Activated CD4-positive, alpha-beta T cell treated with anti-CD3 and anti-CD28 coated beads for 36 hours (primary cell): ENCODE measurements at regions of chr14 and their contacts with region 1.

Region 1: GRCh38 chr14:50321009-50321660 is 9.0 kb downstream of the DMAC2L start:
- DNase-seq: peak; percentile 77
- ATAC-seq: peak; percentile 98
- H3K4me3 Mint-ChIP-seq: no peak overlapping the region
- H3K27ac Mint-ChIP-seq: no peak overlapping the region
- H3K4me1 Mint-ChIP-seq: peaks cover 31% of the 10 kb centered on the region
- H3K27me3 Mint-ChIP-seq: no peaks in the 10 kb centered on the region

Region 2: DNA sequence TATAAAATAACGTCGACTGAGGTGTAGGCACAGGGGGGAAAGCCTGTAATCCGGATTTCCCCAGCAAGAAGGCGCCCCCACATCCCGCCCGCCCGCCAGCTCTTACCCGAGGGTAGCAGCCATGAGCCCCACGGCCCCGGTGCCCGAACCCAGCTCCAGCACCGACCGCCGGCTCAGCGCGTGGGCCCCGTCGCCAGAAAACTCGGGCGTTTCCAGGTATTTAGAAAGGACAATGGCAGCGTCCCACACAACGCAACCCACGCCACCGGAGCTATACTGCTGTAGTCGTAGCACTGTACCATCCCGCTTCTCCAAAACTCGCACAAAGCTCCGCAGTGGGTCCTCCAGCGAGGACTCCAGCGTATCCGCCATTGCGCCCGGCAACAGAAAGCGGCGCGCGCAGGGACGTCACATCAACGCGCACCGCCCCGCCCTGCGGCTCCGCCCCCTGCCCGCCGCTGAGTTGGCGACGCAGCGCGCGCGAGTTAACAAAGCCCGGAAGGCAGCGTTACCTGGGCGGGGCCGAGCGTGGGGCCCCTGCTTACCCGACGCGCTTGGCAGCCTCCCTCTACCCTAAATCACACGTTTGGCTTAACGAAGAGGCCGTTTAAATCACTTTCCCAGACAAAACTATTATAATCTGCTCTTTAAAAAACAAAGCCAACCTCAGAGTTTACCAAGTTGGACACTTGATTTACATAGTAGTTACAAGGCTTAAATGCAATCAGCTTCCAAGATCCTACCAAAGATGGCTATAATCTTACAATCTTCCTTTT is 204.8 kb before region 1 on chr14 and contains the start of gene VCPKMT:
- CTCF ChIA-PET with region 1: interaction called, 7 read pairs
- POLR2A ChIA-PET with region 1: no interaction called
- intact Hi-C with region 1: loop called in 1 of 2 experiments (anchors 2 kb)
- DNase-seq: peak; percentile 98
- ATAC-seq: peak; percentile 99
- H3K4me3 Mint-ChIP-seq: peak within 1 kb of the TSS; percentile 95
- H3K27ac Mint-ChIP-seq: peak within 1 kb of the TSS; percentile 97
- H3K4me1 Mint-ChIP-seq: peaks cover 25% of the 10 kb centered on the region
- H3K27me3 Mint-ChIP-seq: no peaks in the 10 kb centered on the region
- total RNA-seq, gene VCPKMT: 6.6 to 10.4 TPM

Region 3: DNA sequence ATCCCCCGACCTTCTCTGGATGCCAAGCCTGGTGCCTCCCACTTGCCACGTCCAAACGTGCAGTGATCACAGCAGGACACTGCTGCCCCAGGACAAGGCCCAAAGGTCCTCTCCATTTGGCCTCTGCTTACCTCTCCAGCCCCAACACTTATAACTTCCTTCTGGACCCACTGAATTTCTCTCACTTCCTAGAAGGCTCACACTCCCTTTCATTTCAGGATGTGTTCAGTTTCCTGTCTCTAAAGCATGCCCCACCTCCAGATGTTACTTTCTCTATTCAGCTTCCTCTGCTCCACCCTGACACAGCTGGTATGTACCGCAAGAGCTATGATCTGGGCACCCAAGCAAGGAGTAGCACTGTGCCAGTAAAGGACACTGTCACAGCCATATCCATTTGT is 42.6 kb after region 1 on chr14:
- CTCF ChIA-PET with region 1: interaction called, 10 read pairs
- POLR2A ChIA-PET with region 1: interaction called, 7 read pairs
- intact Hi-C with region 1: loop called (anchors 1 to 5 kb)
- DNase-seq: peak; percentile 66
- ATAC-seq: peak; percentile 96
- H3K4me3 Mint-ChIP-seq: peak overlapping the region; percentile 82
- H3K27ac Mint-ChIP-seq: peak overlapping the region; percentile 94
- H3K4me1 Mint-ChIP-seq: peaks cover 20% of the 10 kb centered on the region
- H3K27me3 Mint-ChIP-seq: no peaks in the 10 kb centered on the region

Region 4: DNA sequence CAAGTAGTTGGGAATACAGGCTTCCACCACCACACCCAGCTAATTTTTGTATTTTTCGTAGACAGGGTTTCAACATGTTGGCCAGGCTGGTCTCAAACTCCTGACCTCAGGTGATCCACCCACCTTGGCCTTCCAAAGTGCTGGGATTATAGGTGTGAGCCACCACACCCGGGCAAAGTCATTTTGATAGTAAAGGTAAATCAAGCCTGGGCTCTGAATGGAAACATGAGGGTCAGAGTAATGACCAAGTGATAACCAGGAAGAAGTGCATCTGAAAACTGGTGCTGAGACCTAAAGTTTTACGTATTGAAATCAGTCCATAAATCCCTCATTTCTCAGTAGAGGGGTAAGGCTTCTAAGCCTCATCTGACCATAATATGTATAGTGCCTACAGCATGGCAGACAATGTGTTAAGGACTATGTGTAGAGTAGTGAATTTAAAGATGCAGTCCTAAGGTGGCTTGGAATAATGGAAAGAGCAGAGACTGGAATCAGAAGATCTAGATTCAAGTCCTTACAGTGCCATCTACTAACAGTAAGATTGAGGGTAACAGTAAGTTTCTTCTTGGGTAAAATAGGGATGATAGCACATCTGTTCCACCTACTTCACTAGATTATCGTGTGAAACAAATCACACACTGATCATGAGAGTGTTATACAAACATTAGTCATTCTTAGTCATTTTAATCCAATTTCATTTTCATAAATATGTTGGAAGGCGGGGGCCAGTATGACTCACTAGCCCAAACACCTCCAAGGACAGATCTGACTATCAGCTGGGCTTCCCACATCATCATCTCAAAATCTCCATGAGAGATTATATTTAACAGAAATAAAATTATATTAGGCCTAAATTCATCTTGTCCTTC is 200.0 kb after region 1 on chr14:
- CTCF ChIA-PET with region 1: interaction called, 18 read pairs
- POLR2A ChIA-PET with region 1: interaction called, 3 read pairs
- intact Hi-C with region 1: loop called (anchors 1 kb)
- DNase-seq: peak; percentile 84
- ATAC-seq: peak; percentile 81
- H3K4me3 Mint-ChIP-seq: peak overlapping the region; percentile 55
- H3K27ac Mint-ChIP-seq: peak overlapping the region; percentile 94
- H3K4me1 Mint-ChIP-seq: peaks cover 56% of the 10 kb centered on the region
- H3K27me3 Mint-ChIP-seq: no peaks in the 10 kb centered on the region

Region 5: DNA sequence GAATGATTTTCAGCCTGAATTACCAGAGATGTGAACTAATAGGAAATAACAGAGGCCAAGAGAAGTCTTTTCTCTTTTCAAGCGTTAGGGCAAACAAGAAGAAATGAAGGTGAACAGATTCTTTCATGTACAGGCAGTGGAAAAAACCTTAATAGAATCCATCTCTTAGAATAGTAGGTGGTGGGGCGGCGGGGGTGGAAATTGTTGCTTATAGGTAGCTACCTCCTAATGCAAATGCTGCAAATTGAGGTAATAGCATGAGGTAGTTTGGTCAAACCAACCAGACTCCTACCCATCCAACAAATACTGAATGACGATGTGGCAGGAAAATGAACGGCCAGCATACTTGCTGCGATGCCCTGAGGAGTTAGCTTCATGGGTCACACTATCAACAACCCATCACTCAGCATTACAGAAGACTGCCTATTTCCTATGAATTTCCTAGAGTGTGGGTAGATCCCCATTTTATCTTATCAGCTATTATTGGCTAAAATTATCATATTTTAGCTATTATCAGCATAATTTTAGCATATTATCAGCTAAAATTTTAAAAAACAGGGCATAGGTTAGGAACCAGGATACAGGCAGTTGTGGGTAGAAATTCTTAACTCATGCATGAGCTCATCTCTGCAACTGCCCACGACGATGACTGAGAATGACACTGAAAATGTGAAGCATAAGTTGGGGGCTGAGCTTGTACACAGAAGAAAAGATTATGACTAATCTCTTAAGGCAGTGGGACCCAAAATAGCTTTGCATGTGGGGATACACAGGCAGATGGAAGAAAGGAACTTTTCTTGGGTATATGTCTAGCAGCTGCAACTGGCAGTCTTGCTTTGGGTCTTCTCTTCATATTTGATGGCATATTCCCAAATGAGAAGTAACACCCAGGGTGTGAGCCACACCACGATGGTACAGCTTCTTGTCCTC is 441.1 kb after region 1 on chr14:
- CTCF ChIA-PET with region 1: interaction called, 3 read pairs
- POLR2A ChIA-PET with region 1: no interaction called
- intact Hi-C with region 1: loop called in 1 of 2 experiments (anchors 2 kb)
- DNase-seq: peak; percentile 79
- ATAC-seq: peak; percentile 99
- H3K4me3 Mint-ChIP-seq: no peak overlapping the region
- H3K27ac Mint-ChIP-seq: peak overlapping the region; percentile 58
- H3K4me1 Mint-ChIP-seq: peaks cover 31% of the 10 kb centered on the region
- H3K27me3 Mint-ChIP-seq: no peaks in the 10 kb centered on the region